GM10248 (cell line): ENCODE measurements at regions of chr11 and their contacts with region 1.

Region 1: DNA sequence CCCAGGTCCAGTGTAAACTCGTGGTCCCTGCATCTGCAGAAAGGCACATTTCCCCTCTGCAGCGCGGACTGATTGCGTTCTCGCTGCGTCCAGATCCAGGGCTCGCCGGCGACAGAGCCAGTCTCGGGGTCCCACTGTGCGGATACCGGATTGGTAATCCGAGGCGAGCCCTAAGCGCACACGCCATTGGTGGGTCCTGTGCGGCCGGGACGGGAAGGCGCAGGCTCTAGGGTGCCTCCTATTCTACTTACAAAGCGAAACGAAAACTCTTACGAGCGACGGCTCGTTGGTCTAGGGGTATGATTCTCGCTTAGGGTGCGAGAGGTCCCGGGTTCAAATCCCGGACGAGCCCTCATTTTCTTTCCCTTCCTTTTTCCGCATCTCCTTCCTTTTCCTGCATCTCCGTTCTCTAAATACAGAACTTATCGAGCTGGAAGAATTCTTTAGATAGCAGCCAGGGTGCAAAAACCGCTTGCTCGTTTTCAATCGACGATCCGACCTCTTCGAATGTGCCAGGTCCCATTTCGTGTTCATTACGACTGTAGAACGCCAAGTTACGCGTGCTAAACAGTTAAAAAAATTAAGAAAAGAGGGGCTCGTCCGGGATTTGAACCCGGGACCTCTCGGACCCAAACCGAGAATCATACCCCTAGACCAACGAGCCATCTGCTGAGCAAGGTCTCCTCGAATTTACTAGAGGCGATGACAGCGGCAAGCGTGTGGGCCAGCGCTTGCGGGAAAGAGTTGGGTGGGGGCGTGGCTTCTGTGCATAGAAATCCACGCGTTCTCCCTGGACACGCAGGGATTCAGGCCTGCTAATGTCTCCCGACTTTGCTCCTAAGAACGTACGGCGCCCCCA is 29.2 kb upstream of the WNT11 start:
- DNase-seq: peak; percentile 95
- CTCF ChIP-seq: no peak

Region 2: GRCh38 chr11:76225122-76225611 is 10.3 kb before region 1 on chr11:
- CTCF ChIA-PET with region 1: interaction called, 10 read pairs
- POLR2A ChIA-PET with region 1: no interaction called
- DNase-seq: no peak
- CTCF ChIP-seq: no peak